Heart left ventricle (tissue), 16 donors: ENCODE measurements at regions of chr12 and their contacts with region 1.

Region 1: GRCh38 chr12:13100882-13101769 is 2.3 kb downstream of the GSG1 start:
- DNase-seq: peak; percentile 91 to 95 (median 94)
- ATAC-seq: peak; percentile 55 to 93 (median 84)
- H3K4me3 ChIP-seq: peak overlapping the region; percentile 37 to 70 (median 58)
- H3K27ac ChIP-seq: peak overlapping the region; percentile 85 to 98 (median 92)
- H3K4me1 ChIP-seq: peaks cover 7 to 62% (median 43%) of the 10 kb centered on the region in 12 donors
- H3K27me3 ChIP-seq: no peaks in the 10 kb centered on the region
- CTCF ChIP-seq: peak in 1 of 12 donors; percentile 9
- POLR2A ChIP-seq: peak in 1 of 2 donors; percentile 33

Region 2: DNA sequence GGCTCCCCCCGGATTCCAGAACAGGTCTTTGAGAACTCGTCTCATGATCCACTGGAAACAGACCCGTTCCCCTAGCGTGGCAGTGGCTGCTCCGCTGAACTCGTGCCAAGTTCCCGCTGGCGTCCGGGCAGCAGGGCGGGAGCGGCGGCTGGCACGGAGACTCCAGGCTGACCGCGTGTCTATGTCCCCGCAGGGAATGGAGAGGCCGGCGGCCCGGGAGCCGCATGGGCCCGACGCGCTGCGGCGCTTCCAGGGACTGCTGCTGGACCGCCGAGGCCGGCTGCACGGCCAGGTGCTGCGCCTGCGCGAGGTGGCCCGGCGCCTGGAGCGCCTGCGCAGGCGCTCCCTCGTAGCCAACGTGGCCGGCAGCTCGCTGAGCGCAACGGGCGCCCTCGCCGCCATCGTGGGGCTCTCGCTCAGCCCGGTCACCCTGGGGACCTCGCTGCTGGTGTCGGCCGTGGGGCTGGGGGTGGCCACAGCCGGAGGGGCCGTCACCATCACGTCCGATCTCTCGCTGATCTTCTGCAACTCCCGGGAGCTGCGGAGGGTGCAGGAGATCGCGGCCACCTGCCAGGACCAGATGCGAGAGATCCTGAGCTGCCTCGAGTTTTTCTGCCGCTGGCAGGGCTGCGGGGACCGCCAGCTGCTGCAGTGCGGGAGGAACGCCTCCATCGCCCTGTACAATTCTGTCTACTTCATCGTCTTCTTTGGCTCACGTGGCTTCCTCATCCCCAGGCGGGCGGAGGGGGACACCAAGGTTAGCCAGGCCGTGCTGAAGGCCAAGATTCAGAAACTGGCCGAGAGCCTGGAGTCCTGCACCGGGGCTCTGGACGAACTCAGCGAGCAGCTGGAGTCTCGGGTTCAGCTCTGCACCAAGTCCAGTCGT is 314.2 kb before region 1 on chr12:
- intact Hi-C with region 1: loop called in 1 of 10 experiments (anchors 10 kb)
- DNase-seq: peak; percentile 83 to 92 (median 89)
- ATAC-seq: peak; percentile 54 to 93 (median 73)
- H3K4me3 ChIP-seq: peak overlapping the region; percentile 8 to 85 (median 74)
- H3K27ac ChIP-seq: peak overlapping the region; percentile 72 to 99 (median 95)
- H3K4me1 ChIP-seq: peaks cover 0 to 58% (median 29%) of the 10 kb centered on the region in 12 donors
- H3K27me3 ChIP-seq: no peaks in the 10 kb centered on the region
- CTCF ChIP-seq: peak in 4 of 12 donors; percentile 6 to 21 (median 14)
- POLR2A ChIP-seq: peak in 1 of 2 donors; percentile 79

Region 3: GRCh38 chr12:12999959-13000615 is 101.0 kb before region 1 on chr12 and contains the start of gene HEBP1:
- intact Hi-C with region 1: loop called in 1 of 10 experiments (anchors 2 kb)
- DNase-seq: peak; percentile 96 to 99 (median 98)
- ATAC-seq: peak; percentile 98 to 99 (median 98)
- H3K4me3 ChIP-seq: peak within 1 kb of the TSS; percentile 65 to 94 (median 87)
- H3K27ac ChIP-seq: peak within 1 kb of the TSS; percentile 28 to 98 (median 90)
- H3K4me1 ChIP-seq: peaks cover 0 to 64% (median 19%) of the 10 kb centered on the region in 12 donors
- H3K27me3 ChIP-seq: no peaks in the 10 kb centered on the region
- CTCF ChIP-seq: no peak
- POLR2A ChIP-seq: peak in 1 of 2 donors; percentile 94
- total RNA-seq, gene HEBP1: 26.3 to 65.3 (median 52.6) TPM

Region 4: GRCh38 chr12:13044002-13044905 is 56.9 kb before region 1 on chr12 and contains the start of gene FAM234B:
- intact Hi-C with region 1: no loop called
- DNase-seq: peak; percentile 80 to 92 (median 85)
- ATAC-seq: peak; percentile 86 to 99 (median 98)
- H3K4me3 ChIP-seq: peak within 1 kb of the TSS; percentile 87 to 100 (median 96)
- H3K27ac ChIP-seq: peak within 1 kb of the TSS in 10 of 12 donors; percentile 22 to 83 (median 68)
- H3K4me1 ChIP-seq: peaks cover 0 to 22% (median 8%) of the 10 kb centered on the region in 12 donors
- H3K27me3 ChIP-seq: no peaks in the 10 kb centered on the region
- CTCF ChIP-seq: peak in 6 of 12 donors; percentile 10 to 57 (median 24)
- POLR2A ChIP-seq: no peak
- total RNA-seq, gene FAM234B: 1.5 to 3.5 (median 2.6) TPM

Region 5: DNA sequence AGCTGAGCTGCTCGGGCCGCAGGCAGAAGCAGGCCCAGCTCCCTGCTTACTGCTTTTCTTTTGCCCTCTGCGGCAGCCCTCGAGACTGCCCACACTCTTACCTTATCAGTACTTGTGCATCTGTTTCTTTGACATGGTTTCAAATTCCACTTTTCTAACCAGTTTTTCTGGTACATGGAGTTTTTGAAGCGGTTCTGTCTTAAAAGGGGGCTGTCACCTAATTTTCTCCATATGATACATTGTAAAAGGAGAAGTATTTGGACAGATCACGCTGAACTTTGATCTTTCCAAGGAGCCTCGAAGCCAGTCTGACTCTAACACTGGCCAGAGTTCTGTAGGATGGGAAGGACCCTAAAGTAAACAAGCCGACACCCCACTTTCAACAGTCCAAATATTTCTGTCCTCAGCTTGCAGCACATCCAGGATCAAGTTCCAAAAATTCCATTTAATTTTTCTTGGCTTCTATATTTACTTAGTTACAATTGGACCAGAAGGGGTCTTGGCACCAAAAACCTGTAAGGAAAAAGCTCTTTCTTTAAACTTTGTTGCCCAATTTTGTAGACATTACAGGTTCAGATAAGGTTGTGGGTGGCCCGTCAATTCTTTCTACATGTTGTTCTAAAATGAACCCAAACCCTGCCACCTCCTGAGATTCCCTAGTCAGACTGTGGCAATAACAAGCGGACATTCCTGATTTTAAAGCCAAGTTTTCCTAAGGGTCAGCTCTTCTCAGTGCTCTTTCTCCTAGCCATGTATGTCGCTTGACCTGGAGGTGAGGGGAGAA is 47.1 kb after region 1 on chr12:
- intact Hi-C with region 1: loop called in 6 of 10 experiments (anchors 1 to 5 kb)
- DNase-seq: no peak
- ATAC-seq: peak in 2 of 4 donors; percentile 31 to 45
- H3K4me3 ChIP-seq: no peak overlapping the region
- H3K27ac ChIP-seq: peak overlapping the region in 8 of 12 donors; percentile 12 to 56 (median 36)
- H3K4me1 ChIP-seq: peaks cover 0 to 47% (median 13%) of the 10 kb centered on the region in 12 donors
- H3K27me3 ChIP-seq: no peaks in the 10 kb centered on the region
- CTCF ChIP-seq: no peak
- POLR2A ChIP-seq: no peak

Region 6: DNA sequence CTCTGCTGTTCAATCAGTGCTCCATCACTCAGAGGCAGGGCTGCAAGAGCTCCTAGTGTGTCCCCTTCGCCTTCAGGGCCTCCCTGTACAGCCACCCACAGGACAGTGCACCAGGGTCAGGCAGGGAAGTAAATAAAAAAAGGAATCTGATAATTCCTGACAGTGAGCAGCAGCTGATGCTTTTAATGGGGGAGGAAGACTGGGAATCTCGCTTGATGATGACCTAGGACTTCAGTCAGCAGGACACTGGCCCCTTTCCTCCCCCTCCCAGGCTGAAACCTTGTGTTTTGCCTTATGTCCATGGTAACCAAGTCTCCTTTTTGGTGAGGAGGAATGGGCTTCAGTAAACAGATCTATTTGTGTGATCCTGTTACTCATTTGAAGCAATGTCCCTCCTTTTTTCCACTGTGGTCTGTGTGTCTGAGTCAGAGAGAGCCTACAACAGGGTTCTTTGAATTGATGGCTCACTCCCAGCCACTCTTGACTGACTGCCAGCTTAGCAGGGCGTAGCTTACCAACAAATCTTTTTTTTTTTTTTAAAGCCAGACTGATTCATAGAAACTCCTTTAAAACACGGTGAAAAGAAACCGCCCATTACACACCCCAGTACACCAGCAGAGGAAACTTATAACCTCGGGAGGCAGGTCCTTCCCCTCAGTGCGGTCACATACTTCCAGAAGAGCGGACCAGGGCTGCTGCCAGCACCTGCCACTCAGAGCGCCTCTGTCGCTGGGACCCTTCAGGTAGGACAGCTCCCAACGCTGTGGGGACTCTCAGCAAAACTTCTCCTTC is 95.2 kb after region 1 on chr12 and contains the start of gene EMP1:
- intact Hi-C with region 1: loop called in 7 of 10 experiments (anchors 2 to 5 kb)
- DNase-seq: peak; percentile 87 to 96 (median 92)
- ATAC-seq: peak; percentile 83 to 92 (median 87)
- H3K4me3 ChIP-seq: peak within 1 kb of the TSS; percentile 54 to 85 (median 66)
- H3K27ac ChIP-seq: peak within 1 kb of the TSS; percentile 81 to 99 (median 90)
- H3K4me1 ChIP-seq: peaks cover 0 to 67% (median 32%) of the 10 kb centered on the region in 12 donors
- H3K27me3 ChIP-seq: no peaks in the 10 kb centered on the region
- CTCF ChIP-seq: no peak
- POLR2A ChIP-seq: peak in 1 of 2 donors; percentile 70
- total RNA-seq, gene EMP1: 67.9 to 281 (median 175) TPM

Region 7: GRCh38 chr12:13211859-13212664 is 110.9 kb after region 1 on chr12:
- intact Hi-C with region 1: loop called in 8 of 10 experiments (anchors 1 to 5 kb)
- DNase-seq: peak in 3 of 5 donors; percentile 38 to 51 (median 43)
- ATAC-seq: peak in 2 of 4 donors; percentile 26 to 28
- H3K4me3 ChIP-seq: no peak overlapping the region
- H3K27ac ChIP-seq: peak overlapping the region in 1 of 12 donors; percentile 13
- H3K4me1 ChIP-seq: peaks cover 3 to 52% (median 45%) of the 10 kb centered on the region in 12 donors
- H3K27me3 ChIP-seq: no peaks in the 10 kb centered on the region
- CTCF ChIP-seq: peak; percentile 61 to 90 (median 76)
- POLR2A ChIP-seq: no peak